GM23248 (cell line): ENCODE measurements at regions of chr7 and their contacts with region 1.

Region 1: DNA sequence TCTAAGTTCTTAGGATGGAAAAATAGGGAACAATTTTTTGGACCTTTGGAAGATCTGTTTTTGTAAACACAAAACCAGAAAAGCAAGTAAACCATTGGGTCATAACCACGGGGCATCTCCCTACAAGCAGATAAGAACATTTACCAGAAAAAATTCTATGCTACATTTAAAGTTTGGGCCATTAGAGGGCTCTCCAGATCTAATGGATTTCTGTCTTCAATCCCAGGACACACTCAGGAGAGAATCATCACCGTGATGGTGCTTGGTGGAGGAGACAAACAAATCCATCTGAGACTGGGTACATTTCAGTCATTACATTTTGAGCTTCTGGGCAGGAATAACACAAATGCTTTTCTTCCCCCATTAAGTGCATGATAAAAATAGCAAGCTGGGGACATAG is 178.4 kb upstream of the TARP start:
- DNase-seq: peak; percentile 76
- H3K4me3 ChIP-seq: no peak overlapping the region
- H3K27ac ChIP-seq: peak overlapping the region; percentile 10; the same call in 1 of the 2 replicates
- H3K4me1 ChIP-seq: peaks cover 24% of the 10 kb centered on the region
- H3K27me3 ChIP-seq: no peaks in the 10 kb centered on the region

Region 2: GRCh38 chr7:37433166-37433565 is 1018.7 kb before region 1 on chr7:
- in situ Hi-C with region 1: no loop called
- DNase-seq: no peak
- H3K4me3 ChIP-seq: no peak overlapping the region
- H3K27ac ChIP-seq: no peak overlapping the region
- H3K4me1 ChIP-seq: no peaks in the 10 kb centered on the region
- H3K27me3 ChIP-seq: no peaks in the 10 kb centered on the region

Region 3: GRCh38 chr7:38169847-38170246 is 282.0 kb before region 1 on chr7:
- in situ Hi-C with region 1: no loop called
- DNase-seq: peak; percentile 72
- H3K4me3 ChIP-seq: no peak overlapping the region
- H3K27ac ChIP-seq: 0 out of 2 replicates have a peak overlapping the region, but pooled peaks have one; percentile 19
- H3K4me1 ChIP-seq: 0 out of 2 replicates have a peak, but pooled peaks cover 7% of the 10 kb centered on the region
- H3K27me3 ChIP-seq: no peaks in the 10 kb centered on the region

Region 4: GRCh38 chr7:38656968-38657367 is 205.1 kb after region 1 on chr7:
- in situ Hi-C with region 1: loop called (anchors 10 kb)
- DNase-seq: peak; percentile 55
- H3K4me3 ChIP-seq: no peak overlapping the region
- H3K27ac ChIP-seq: no peak overlapping the region
- H3K4me1 ChIP-seq: peaks cover 9% of the 10 kb centered on the region; the same call in 1 of the 2 replicates
- H3K27me3 ChIP-seq: no peaks in the 10 kb centered on the region